ENCODE measurements at regions of chr10 and their contacts with region 1.

Region 1: GRCh38 chr10:119933179-119933578 is 40.6 kb downstream of the SEC23IP start:
- DNase-seq: peak; percentile 73
- H3K4me3 ChIP-seq: no peak overlapping the region
- H3K27ac ChIP-seq: no peak overlapping the region
- H3K4me1 ChIP-seq: peaks cover 7% of the 10 kb centered on the region
- H3K27me3 ChIP-seq: no peaks in the 10 kb centered on the region
- CTCF ChIP-seq: peak; percentile 68

Region 2: GRCh38 chr10:119616882-119617570 is 316.2 kb before region 1 on chr10:
- CTCF ChIA-PET with region 1: no interaction called
- POLR2A ChIA-PET with region 1: no interaction called
- intact Hi-C with region 1: no loop called
- DNase-seq: peak; percentile 46
- H3K4me3 ChIP-seq: no peak overlapping the region
- H3K27ac ChIP-seq: no peak overlapping the region
- H3K4me1 ChIP-seq: peaks cover 13% of the 10 kb centered on the region
- H3K27me3 ChIP-seq: no peaks in the 10 kb centered on the region
- CTCF ChIP-seq: peak; percentile 55

Region 3: GRCh38 chr10:120017733-120018417 is 84.7 kb after region 1 on chr10:
- CTCF ChIA-PET with region 1: no interaction called
- POLR2A ChIA-PET with region 1: no interaction called
- intact Hi-C with region 1: no loop called
- DNase-seq: no peak
- H3K4me3 ChIP-seq: no peak overlapping the region
- H3K27ac ChIP-seq: no peak overlapping the region
- H3K4me1 ChIP-seq: no peaks in the 10 kb centered on the region
- H3K27me3 ChIP-seq: peaks cover 59% of the 10 kb centered on the region
- CTCF ChIP-seq: no peak

Region 4: GRCh38 chr10:120336911-120337540 is 403.8 kb after region 1 on chr10:
- CTCF ChIA-PET with region 1: no interaction called
- POLR2A ChIA-PET with region 1: no interaction called
- intact Hi-C with region 1: loop called (anchors 1 kb)
- DNase-seq: peak; percentile 70
- H3K4me3 ChIP-seq: no peak overlapping the region
- H3K27ac ChIP-seq: no peak overlapping the region
- H3K4me1 ChIP-seq: no peaks in the 10 kb centered on the region
- H3K27me3 ChIP-seq: peaks cover 70% of the 10 kb centered on the region
- CTCF ChIP-seq: peak; percentile 83

Measured in A673 (cell line).